ENCODE measurements at regions of chr5 and their contacts with region 1.

Region 1: GRCh38 chr5:172849606-172850453 is 15.8 kb downstream of the ERGIC1 start:
- DNase-seq: peak in 2 of 3 donors; percentile 46 to 58
- H3K4me3 ChIP-seq: peak overlapping the region in 2 of 7 experiments; percentile 37 to 46
- H3K27ac ChIP-seq: peak overlapping the region in 1 of 2 experiments; percentile 46
- H3K4me1 ChIP-seq: peaks cover 17 to 92% (median 78%) of the 10 kb centered on the region in 4 experiments
- H3K27me3 ChIP-seq: no peaks in the 10 kb centered on the region

Region 2: GRCh38 chr5:172714491-172715421 is 135.1 kb before region 1 on chr5:
- CTCF ChIA-PET with region 1: interaction called, 12 read pairs
- POLR2A ChIA-PET with region 1: interaction called, 4 read pairs
- DNase-seq: peak; percentile 64 to 75 (median 66)
- H3K4me3 ChIP-seq: no peak overlapping the region
- H3K27ac ChIP-seq: no peak overlapping the region
- H3K4me1 ChIP-seq: peaks cover 0 to 15% (median 5%) of the 10 kb centered on the region in 4 experiments
- H3K27me3 ChIP-seq: no peaks in the 10 kb centered on the region

Region 3: GRCh38 chr5:172777881-172778814 is 71.7 kb before region 1 on chr5:
- CTCF ChIA-PET with region 1: interaction called, 12 read pairs
- POLR2A ChIA-PET with region 1: interaction called, 3 read pairs
- DNase-seq: peak in 1 of 3 donors; percentile 48
- H3K4me3 ChIP-seq: peak overlapping the region in 4 of 7 experiments; percentile 20 to 60 (median 42)
- H3K27ac ChIP-seq: peak overlapping the region; percentile 37 to 76
- H3K4me1 ChIP-seq: peaks cover 28 to 49% (median 41%) of the 10 kb centered on the region in 4 experiments
- H3K27me3 ChIP-seq: no peaks in the 10 kb centered on the region

Region 4: GRCh38 chr5:172788771-172789686 is 60.8 kb before region 1 on chr5:
- CTCF ChIA-PET with region 1: no interaction called
- POLR2A ChIA-PET with region 1: no interaction called
- DNase-seq: peak in 2 of 3 donors; percentile 70 to 74
- H3K4me3 ChIP-seq: no peak overlapping the region
- H3K27ac ChIP-seq: peak overlapping the region in 1 of 2 experiments; percentile 72
- H3K4me1 ChIP-seq: peaks cover 0 to 44% (median 14%) of the 10 kb centered on the region in 4 experiments
- H3K27me3 ChIP-seq: no peaks in the 10 kb centered on the region

Region 5: GRCh38 chr5:172834415-172835289 is 15.2 kb before region 1 on chr5:
- CTCF ChIA-PET with region 1: interaction called, 15 read pairs
- POLR2A ChIA-PET with region 1: no interaction called
- DNase-seq: peak in 2 of 3 donors; percentile 59 to 67
- H3K4me3 ChIP-seq: peak overlapping the region; percentile 70 to 95 (median 86)
- H3K27ac ChIP-seq: peak overlapping the region; percentile 64 to 82
- H3K4me1 ChIP-seq: peaks cover 14 to 64% (median 57%) of the 10 kb centered on the region in 4 experiments
- H3K27me3 ChIP-seq: no peaks in the 10 kb centered on the region

Region 6: GRCh38 chr5:172868924-172869591 is 19.2 kb after region 1 on chr5:
- CTCF ChIA-PET with region 1: interaction called, 16 read pairs
- POLR2A ChIA-PET with region 1: interaction called, 3 read pairs
- DNase-seq: peak in 1 of 3 donors; percentile 40
- H3K4me3 ChIP-seq: peak overlapping the region in 1 of 7 experiments; percentile 4
- H3K27ac ChIP-seq: peak overlapping the region in 1 of 2 experiments; percentile 3
- H3K4me1 ChIP-seq: peaks cover 9 to 64% (median 55%) of the 10 kb centered on the region in 4 experiments
- H3K27me3 ChIP-seq: no peaks in the 10 kb centered on the region

Region 7: DNA sequence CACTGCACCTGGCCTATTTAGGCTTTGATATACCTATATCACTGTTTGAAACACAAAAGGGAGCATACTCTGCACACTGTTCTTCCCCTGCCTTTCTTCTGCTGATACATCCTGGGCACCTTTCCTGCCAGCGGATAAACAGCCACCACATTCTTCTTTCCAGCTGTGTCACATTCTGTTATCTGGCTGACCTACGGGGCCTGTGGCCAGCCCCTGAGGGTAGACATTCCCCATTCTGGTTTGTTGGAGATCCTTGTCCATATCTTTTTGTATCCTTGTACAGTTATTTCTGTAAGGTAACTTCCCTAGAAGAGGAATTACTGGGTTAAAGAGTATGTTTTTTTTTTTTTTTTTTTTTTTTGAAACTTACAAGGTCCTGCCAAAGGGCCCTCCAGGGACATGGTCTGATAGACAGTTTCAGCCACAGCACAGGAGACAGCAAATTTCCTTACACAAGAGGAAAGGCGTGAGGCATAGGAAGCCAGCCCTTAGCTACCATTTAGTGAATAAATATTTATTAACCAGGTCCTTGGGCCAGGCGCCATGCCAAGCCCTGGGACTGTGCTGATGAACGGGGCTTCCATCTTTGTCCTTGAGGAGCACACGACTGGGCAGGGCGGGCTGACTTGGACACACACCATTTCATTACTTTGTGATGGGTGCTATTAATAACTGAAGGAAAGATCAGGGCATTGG is 42.0 kb after region 1 on chr5:
- CTCF ChIA-PET with region 1: no interaction called
- POLR2A ChIA-PET with region 1: no interaction called
- DNase-seq: no peak
- H3K4me3 ChIP-seq: no peak overlapping the region
- H3K27ac ChIP-seq: no peak overlapping the region
- H3K4me1 ChIP-seq: peaks cover 0 to 8% (median 4%) of the 10 kb centered on the region in 4 experiments
- H3K27me3 ChIP-seq: no peaks in the 10 kb centered on the region

Region 8: GRCh38 chr5:172984243-172984953 is 134.6 kb after region 1 on chr5:
- CTCF ChIA-PET with region 1: no interaction called
- POLR2A ChIA-PET with region 1: no interaction called
- DNase-seq: peak; percentile 92 to 96 (median 95)
- H3K4me3 ChIP-seq: peak overlapping the region; percentile 73 to 94 (median 88)
- H3K27ac ChIP-seq: peak overlapping the region; percentile 74 to 94
- H3K4me1 ChIP-seq: peaks cover 2 to 19% (median 15%) of the 10 kb centered on the region in 4 experiments
- H3K27me3 ChIP-seq: no peaks in the 10 kb centered on the region

Region 9: DNA sequence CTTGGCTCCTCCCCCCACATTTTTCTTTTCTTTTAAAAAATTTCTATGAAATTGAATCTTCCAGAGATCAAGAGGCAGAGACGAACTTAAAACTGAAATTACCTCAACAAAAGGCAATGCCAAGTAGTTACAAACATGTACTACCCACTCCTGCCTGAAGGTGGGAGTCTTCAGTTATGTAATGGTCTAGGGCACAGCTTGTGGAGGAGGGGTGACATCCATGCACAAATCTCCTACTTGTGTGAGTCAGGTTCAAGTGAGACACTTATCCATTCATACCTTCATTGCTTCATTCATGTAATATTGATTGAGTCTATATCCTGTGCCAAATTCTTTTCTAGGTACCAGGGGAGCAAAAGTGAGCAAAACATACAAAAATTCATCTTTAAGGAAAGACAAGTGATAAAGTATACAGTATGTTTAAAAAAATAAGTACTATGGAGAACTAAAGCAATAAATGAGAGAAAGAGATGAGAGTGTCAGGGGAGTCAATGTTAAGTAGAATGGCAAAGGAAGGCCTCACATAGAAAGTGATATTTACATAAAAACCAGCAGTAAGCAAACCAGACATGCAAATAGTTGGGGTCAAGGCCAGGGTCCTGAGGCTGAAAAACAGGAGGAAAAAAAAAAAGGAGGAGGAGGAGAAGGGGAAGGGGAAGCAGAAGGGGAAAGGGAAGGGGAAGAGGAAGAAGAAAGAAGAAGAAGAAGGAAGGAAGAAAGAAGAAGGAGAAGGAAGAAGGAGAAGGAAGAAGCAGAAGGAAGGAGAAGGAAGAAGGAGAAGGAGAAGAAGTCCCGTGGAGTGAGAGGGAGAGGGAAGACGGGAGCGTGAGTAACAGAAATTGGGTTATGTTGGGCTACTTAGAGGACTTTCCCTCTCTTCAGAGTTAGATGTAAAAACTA is 1170.8 kb after region 1 on chr5:
- CTCF ChIA-PET with region 1: no interaction called
- POLR2A ChIA-PET with region 1: no interaction called
- DNase-seq: peak; percentile 16 to 47 (median 44)
- H3K4me3 ChIP-seq: no peak overlapping the region
- H3K27ac ChIP-seq: no peak overlapping the region
- H3K4me1 ChIP-seq: no peaks in the 10 kb centered on the region
- H3K27me3 ChIP-seq: peaks cover 0 to 20% (median 4%) of the 10 kb centered on the region in 5 experiments

Measured in common myeloid progenitor, CD34-positive (primary cell).